ENCODE measurements at regions of chr12 and their contacts with region 1.

Region 1: GRCh38 chr12:110449799-110450497 is at the start of gene ARPC3:
- DNase-seq: peak; percentile 95 to 97 (median 97)
- H3K4me3 ChIP-seq: peak within 1 kb of the TSS; percentile 67 to 89 (median 89)
- H3K4me3 Mint-ChIP-seq: peak within 1 kb of the TSS; percentile 99
- H3K27ac ChIP-seq: peak within 1 kb of the TSS; percentile 96 to 100
- H3K27ac Mint-ChIP-seq: peak within 1 kb of the TSS; percentile 99 to 100 (median 100)
- H3K4me1 ChIP-seq: peaks cover 48 to 52% of the 10 kb centered on the region in 2 donors
- H3K4me1 Mint-ChIP-seq: peaks cover 45% of the 10 kb centered on the region
- H3K27me3 ChIP-seq: no peaks in the 10 kb centered on the region
- H3K27me3 Mint-ChIP-seq: no peaks in the 10 kb centered on the region
- CTCF ChIP-seq: peak; percentile 89
- polyA plus RNA-seq, gene ARPC3: 133 to 1,727 (median 1,716) TPM

Region 2: GRCh38 chr12:110028323-110028722 is 421.6 kb before region 1 on chr12:
- intact Hi-C with region 1: no loop called
- DNase-seq: no peak
- H3K4me3 ChIP-seq: no peak overlapping the region
- H3K4me3 Mint-ChIP-seq: no peak overlapping the region
- H3K27ac ChIP-seq: peak overlapping the region in 1 of 2 donors; percentile 4
- H3K27ac Mint-ChIP-seq: peak overlapping the region in 2 of 7 donors; percentile 12 to 18
- H3K4me1 ChIP-seq: no peaks in the 10 kb centered on the region
- H3K4me1 Mint-ChIP-seq: peaks cover 8% of the 10 kb centered on the region
- H3K27me3 ChIP-seq: no peaks in the 10 kb centered on the region
- H3K27me3 Mint-ChIP-seq: peaks cover 0 to 2% (median 0%) of the 10 kb centered on the region in 3 donors
- CTCF ChIP-seq: no peak

Region 3: GRCh38 chr12:110379197-110379596 is 70.8 kb before region 1 on chr12:
- intact Hi-C with region 1: no loop called
- DNase-seq: no peak
- H3K4me3 ChIP-seq: no peak overlapping the region
- H3K4me3 Mint-ChIP-seq: no peak overlapping the region
- H3K27ac ChIP-seq: peak overlapping the region; percentile 14 to 47
- H3K27ac Mint-ChIP-seq: peak overlapping the region in 6 of 7 donors; percentile 26 to 82 (median 61)
- H3K4me1 ChIP-seq: peaks cover 18% of the 10 kb centered on the region in 2 donors
- H3K4me1 Mint-ChIP-seq: peaks cover 18% of the 10 kb centered on the region
- H3K27me3 ChIP-seq: no peaks in the 10 kb centered on the region
- H3K27me3 Mint-ChIP-seq: peaks cover 0 to 1% (median 1%) of the 10 kb centered on the region in 3 donors
- CTCF ChIP-seq: no peak

Region 4: DNA sequence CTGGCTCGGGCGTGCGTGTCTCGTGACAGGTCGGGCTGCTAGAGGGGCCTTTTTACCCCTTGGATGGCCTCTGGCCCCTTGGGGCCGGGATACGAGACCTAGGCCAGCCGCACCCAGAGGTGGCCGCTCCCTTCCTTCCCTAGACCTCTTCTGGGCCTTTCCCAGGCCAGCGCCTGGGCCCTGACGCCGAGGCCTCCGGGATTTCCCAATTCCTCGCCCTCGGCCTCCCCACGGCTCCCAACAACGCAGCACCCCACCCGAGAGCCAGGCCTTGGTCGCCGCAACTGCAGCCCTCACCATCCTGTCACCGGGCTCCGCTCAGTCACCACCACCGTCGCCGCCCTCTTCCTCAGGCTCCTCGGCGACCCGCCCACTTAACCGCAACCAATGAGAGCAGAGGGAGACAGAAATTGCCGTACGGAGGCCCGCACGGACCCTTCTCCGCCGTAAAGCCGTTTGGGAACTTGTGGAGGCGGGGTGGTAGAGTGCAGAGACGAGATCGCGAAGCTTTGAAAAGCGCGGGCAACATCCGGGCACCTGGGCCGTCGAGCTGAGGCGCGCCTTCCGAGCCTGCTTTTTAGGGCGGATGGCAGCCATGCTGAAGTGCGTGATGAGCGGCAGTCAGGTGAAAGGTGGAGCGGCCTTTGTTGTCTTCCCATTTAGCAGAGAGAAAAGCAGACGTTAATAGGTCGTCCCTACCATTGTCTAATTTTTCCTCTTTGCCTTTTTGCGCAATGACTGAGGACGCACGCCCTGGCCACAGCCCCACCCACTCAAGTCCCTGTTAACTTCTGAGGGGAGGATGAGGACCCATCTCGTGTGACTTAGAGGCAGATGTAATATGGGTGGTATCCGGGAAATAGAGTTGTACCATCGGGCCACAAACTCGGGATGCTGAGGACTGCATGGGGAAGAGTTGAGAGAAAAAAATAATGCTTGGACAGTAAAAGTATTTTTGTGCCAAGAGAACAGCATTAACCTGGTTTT is 52.1 kb after region 1 on chr12 and contains the starts of genes RAD9B and VPS29:
- intact Hi-C with region 1: loop called in 1 of 2 experiments (anchors 2 kb)
- DNase-seq: peak; percentile 96 to 99 (median 98)
- H3K4me3 ChIP-seq: peak within 1 kb of the TSS; percentile 68 to 92 (median 91)
- H3K4me3 Mint-ChIP-seq: peak within 1 kb of the TSS; percentile 98
- H3K27ac ChIP-seq: peak within 1 kb of the TSS; percentile 90 to 94
- H3K27ac Mint-ChIP-seq: peak within 1 kb of the TSS; percentile 94 to 98 (median 96)
- H3K4me1 ChIP-seq: peaks cover 29 to 49% of the 10 kb centered on the region in 2 donors
- H3K4me1 Mint-ChIP-seq: peaks cover 38% of the 10 kb centered on the region
- H3K27me3 ChIP-seq: no peaks in the 10 kb centered on the region
- H3K27me3 Mint-ChIP-seq: no peaks in the 10 kb centered on the region
- CTCF ChIP-seq: no peak
- polyA plus RNA-seq, gene RAD9B: 1.1 to 3.0 (median 1.3) TPM
- polyA plus RNA-seq, gene VPS29: 224 to 409 (median 342) TPM

Region 5: GRCh38 chr12:110600254-110600653 is 150.3 kb after region 1 on chr12:
- intact Hi-C with region 1: loop called (anchors 5 kb)
- DNase-seq: peak; percentile 52 to 85 (median 76)
- H3K4me3 ChIP-seq: no peak overlapping the region
- H3K4me3 Mint-ChIP-seq: no peak overlapping the region
- H3K27ac ChIP-seq: peak overlapping the region; percentile 74 to 81
- H3K27ac Mint-ChIP-seq: peak overlapping the region; percentile 8 to 85 (median 82)
- H3K4me1 ChIP-seq: peaks cover 29 to 42% of the 10 kb centered on the region in 2 donors
- H3K4me1 Mint-ChIP-seq: peaks cover 44% of the 10 kb centered on the region
- H3K27me3 ChIP-seq: no peaks in the 10 kb centered on the region
- H3K27me3 Mint-ChIP-seq: peaks cover 0 to 2% (median 0%) of the 10 kb centered on the region in 3 donors
- CTCF ChIP-seq: peak; percentile 78

Region 6: DNA sequence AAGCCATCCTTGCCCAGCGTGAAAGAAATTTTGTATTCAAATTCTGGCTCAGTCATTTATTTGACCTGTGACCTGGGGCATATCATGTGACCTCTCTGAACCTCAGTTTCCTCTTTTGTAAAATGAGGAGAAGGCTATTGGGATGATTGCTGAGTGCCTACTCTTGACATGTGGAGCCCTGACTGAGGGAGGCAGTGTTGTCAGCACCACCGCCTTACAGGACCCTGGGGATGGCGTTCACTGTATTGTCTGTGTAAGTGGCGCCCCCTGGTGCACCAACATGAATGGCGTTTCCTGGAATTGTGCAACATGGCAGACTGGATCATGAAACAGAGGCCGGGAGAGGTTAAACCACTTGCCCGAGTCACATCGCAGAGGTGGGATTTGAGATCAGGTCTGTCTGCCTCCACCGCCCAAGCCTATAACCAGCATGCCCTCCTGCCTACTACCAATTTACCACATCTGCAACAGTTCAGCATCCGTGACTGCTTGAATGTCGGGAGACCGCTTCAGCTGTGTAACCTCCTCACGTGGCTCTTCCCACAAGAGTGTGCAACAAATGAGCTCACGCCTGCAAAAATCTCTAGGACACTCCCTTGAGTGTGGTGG is 376.7 kb after region 1 on chr12:
- intact Hi-C with region 1: loop called (anchors 5 to 10 kb)
- DNase-seq: peak; percentile 74 to 85 (median 83)
- H3K4me3 ChIP-seq: peak overlapping the region in 2 of 3 experiments; percentile 3 to 58
- H3K4me3 Mint-ChIP-seq: peak overlapping the region; percentile 70 to 87
- H3K27ac ChIP-seq: no peak overlapping the region
- H3K27ac Mint-ChIP-seq: peak overlapping the region in 5 of 7 donors; percentile 54 to 74 (median 73)
- H3K4me1 ChIP-seq: peaks cover 0 to 6% of the 10 kb centered on the region in 2 donors
- H3K4me1 Mint-ChIP-seq: peaks cover 8% of the 10 kb centered on the region
- H3K27me3 ChIP-seq: no peaks in the 10 kb centered on the region
- H3K27me3 Mint-ChIP-seq: peaks cover 2 to 6% (median 6%) of the 10 kb centered on the region in 3 donors
- CTCF ChIP-seq: peak; percentile 89